Sigmoid colon (tissue), 7 donors: ENCODE measurements at regions of chr7 and their contacts with region 1.

Region 1: DNA sequence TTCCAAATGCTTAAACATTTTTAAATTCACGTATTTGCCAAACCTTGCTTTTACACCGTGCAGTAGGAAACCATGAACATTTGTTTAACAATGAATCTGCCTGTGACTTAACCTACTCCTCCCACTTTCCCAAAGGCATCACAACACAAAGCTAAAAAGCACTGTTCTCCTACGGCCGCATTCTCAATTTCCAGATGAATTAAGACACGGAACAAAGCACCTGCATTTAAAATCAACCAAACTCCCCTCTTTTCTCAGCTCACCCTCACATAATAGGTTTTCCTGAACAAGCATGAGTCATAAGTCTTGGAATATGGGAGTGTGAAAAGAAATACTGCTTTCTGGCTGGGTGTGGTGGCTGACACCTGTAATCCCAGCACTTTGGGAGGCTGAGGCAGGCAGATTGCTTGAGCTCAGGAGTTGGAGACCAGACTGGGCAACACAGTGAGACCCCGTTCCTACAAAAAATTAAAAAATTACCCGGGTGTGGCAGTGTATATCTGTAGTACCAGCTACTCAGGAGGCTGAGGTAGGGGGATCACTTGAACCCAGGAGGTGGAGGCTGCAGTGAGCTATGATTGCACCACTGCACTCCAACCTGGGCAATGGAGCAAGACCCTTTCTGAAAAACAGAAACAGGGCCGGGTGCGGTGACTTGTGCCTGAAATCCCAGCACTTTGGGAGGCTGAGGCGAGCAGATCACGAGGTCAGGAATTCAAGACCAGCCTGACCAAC is 51.7 kb upstream of the CYTH3 start:
- DNase-seq: no peak
- H3K4me3 ChIP-seq: no peak overlapping the region
- H3K27ac ChIP-seq: no peak overlapping the region
- H3K4me1 ChIP-seq: peaks cover 0 to 5% (median 2%) of the 10 kb centered on the region in 4 donors
- H3K27me3 ChIP-seq: no peaks in the 10 kb centered on the region
- CTCF ChIP-seq: no peak
- EP300 ChIP-seq: no peak
- POLR2A ChIP-seq: no peak

Region 2: DNA sequence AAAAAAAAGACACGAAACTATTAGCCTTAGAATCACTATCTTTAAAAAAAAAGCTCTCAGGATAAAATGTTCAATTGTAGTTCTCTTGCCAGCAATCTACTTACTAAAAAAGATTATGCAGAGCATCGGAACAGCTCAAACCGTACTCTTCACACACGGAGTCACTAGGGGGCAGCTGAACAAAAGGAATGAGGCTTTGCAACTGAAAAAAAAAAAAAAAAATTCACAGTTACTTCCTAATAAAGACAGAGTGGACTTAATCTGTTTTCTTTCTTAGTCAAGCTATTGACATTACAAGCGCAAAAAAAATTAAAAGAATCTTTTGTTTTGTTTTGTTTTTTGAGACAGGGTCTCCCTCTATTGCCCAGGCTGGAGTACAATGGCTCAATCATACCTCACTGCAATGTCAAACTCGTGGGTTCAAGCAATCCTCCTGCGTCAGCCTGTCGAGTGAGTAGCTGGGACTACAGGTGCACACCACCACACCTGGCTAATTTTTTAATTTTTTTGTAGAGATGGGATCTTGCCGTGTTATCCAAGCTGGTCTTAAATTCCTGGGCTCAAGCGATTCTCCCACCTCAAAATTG is 326.8 kb before region 1 on chr7:
- intact Hi-C with region 1: loop called (anchors 2 kb)
- DNase-seq: no peak
- H3K4me3 ChIP-seq: no peak overlapping the region
- H3K27ac ChIP-seq: peak overlapping the region in 2 of 4 donors; percentile 54 to 63
- H3K4me1 ChIP-seq: peaks cover 0 to 6% (median 2%) of the 10 kb centered on the region in 4 donors
- H3K27me3 ChIP-seq: no peaks in the 10 kb centered on the region
- CTCF ChIP-seq: peak; percentile 43 to 61 (median 60)
- EP300 ChIP-seq: no peak
- POLR2A ChIP-seq: no peak

Region 3: GRCh38 chr7:6160191-6160623 is 163.9 kb before region 1 on chr7:
- intact Hi-C with region 1: loop called (anchors 1 kb)
- DNase-seq: peak; percentile 92
- H3K4me3 ChIP-seq: no peak overlapping the region
- H3K27ac ChIP-seq: peak overlapping the region; percentile 58 to 74 (median 64)
- H3K4me1 ChIP-seq: peaks cover 0 to 29% (median 15%) of the 10 kb centered on the region in 4 donors
- H3K27me3 ChIP-seq: no peaks in the 10 kb centered on the region
- CTCF ChIP-seq: peak; percentile 54 to 85 (median 68)
- EP300 ChIP-seq: no peak
- POLR2A ChIP-seq: no peak

Region 4: DNA sequence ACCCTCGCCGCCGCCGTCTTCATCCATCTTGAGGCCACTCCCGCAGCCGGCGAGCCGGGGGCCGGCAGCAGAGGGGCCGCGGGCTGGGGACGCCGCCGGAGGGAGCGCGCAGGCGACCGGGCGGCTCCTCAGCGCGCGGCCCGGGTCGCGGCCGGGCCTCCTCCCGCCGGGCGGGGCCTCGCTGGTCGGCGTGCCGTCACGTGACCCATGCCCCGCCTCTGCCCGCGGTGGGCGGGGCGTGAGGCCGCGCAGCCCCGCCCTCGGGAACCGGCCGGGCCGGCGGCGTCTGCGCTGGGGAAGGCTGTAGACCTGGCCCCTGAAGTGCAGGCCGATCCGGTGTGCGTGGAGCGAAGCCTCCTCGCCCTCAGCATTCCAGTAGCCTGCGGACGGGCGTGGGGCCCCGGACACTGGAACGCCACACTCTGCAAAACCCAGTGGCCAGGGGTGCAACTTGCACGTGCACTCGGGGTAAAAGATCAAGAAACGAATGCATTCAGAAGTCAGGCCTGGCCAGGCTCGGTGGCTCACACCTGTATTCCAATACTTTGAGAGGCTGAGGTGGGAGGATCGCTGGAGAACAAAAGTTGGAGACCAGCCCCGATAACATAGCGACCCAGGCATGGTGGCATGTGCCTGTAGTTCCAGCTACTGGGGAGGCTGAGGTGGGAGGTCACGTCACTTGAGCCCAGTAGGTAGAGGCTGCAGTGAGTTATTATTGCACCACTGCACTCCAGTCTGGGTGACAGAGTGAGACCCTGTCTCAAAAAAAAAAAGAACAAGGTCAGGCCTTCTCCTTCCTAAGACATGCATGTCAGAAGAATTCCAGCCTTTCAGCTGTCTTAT is 51.4 kb before region 1 on chr7 and contains the start of gene CYTH3:
- intact Hi-C with region 1: loop called (anchors 5 kb)
- DNase-seq: peak; percentile 88
- H3K4me3 ChIP-seq: peak within 1 kb of the TSS; percentile 70 to 98 (median 92)
- H3K27ac ChIP-seq: peak within 1 kb of the TSS; percentile 77 to 84 (median 78)
- H3K4me1 ChIP-seq: peaks cover 0 to 23% (median 16%) of the 10 kb centered on the region in 4 donors
- H3K27me3 ChIP-seq: no peaks in the 10 kb centered on the region
- CTCF ChIP-seq: no peak
- EP300 ChIP-seq: no peak
- POLR2A ChIP-seq: no peak
- total RNA-seq, gene CYTH3: 27.1 to 34.8 (median 29.3) TPM

Region 5: GRCh38 chr7:6392706-6393666 is 68.9 kb after region 1 on chr7:
- intact Hi-C with region 1: no loop called
- DNase-seq: peak; percentile 85
- H3K4me3 ChIP-seq: no peak overlapping the region
- H3K27ac ChIP-seq: peak overlapping the region; percentile 27 to 66 (median 40)
- H3K4me1 ChIP-seq: peaks cover 0 to 60% (median 41%) of the 10 kb centered on the region in 4 donors
- H3K27me3 ChIP-seq: no peaks in the 10 kb centered on the region
- CTCF ChIP-seq: no peak
- EP300 ChIP-seq: no peak
- POLR2A ChIP-seq: no peak